CD4-positive, alpha-beta T cell (primary cell): ENCODE measurements at regions of chr1 and their contacts with region 1.

Region 1: DNA sequence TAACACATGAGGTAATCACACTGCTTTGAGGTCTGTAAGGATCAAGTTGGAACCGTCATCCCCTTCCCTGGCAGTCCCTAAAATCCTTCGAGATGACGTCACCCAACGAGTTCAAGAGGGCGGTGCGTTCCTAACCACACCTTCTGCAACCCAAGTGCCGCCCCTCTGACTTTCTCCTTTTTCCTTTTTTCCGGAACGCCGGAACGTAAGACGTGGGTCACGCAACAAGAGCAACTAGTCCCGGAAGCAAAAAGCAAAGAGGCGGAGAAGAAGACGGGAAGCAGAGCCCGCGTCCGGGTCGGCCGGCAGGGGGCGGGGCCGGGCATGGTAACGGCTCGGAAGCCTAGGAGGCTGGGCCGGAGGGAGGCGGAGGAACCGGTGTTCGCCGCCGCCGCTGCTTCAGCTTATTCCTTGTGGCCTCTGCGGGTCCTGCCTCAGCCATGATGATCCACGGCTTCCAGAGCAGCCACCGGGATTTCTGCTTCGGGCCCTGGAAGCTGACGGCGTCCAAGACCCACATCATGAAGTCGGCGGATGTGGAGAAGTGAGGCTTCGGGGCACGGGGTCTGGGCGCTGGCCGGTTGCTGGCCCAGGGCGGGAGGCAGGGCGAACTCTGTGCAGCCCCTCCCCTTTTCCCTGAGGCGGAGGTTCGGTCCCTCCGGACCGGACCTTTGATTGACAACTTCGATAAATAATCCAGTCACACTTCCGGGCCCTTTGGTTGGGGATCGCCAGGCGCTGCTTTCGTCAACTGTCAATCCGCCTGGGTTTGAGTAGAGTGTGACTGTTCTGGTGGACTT is at the start of gene TIPRL:
- DNase-seq: peak; percentile 85 to 97 (median 92)
- ATAC-seq: peak; percentile 89
- H3K4me3 ChIP-seq: peak within 1 kb of the TSS; percentile 89
- H3K4me3 Mint-ChIP-seq: no peak within 1 kb of the TSS
- H3K27ac ChIP-seq: peak within 1 kb of the TSS; percentile 95 to 96
- H3K27ac Mint-ChIP-seq: no peak within 1 kb of the TSS
- H3K4me1 ChIP-seq: peaks cover 22% of the 10 kb centered on the region
- H3K4me1 Mint-ChIP-seq: peaks cover 15% of the 10 kb centered on the region
- H3K27me3 ChIP-seq: no peaks in the 10 kb centered on the region
- H3K27me3 Mint-ChIP-seq: peaks cover 12% of the 10 kb centered on the region
- CTCF ChIP-seq: peak; percentile 63
- total RNA-seq, gene TIPRL: 15.8 to 16.4 TPM

Region 2: GRCh38 chr1:167715157-167715999 is 463.5 kb before region 1 on chr1:
- CTCF ChIA-PET with region 1: no interaction called
- POLR2A ChIA-PET with region 1: no interaction called
- intact Hi-C with region 1: loop called in 1 of 2 experiments (anchors 5 kb)
- DNase-seq: peak; percentile 75 to 94 (median 84)
- ATAC-seq: peak; percentile 59
- H3K4me3 ChIP-seq: peak overlapping the region; percentile 79
- H3K4me3 Mint-ChIP-seq: peak overlapping the region; percentile 92
- H3K27ac ChIP-seq: peak overlapping the region in 1 of 2 donors; percentile 27
- H3K27ac Mint-ChIP-seq: peak overlapping the region; percentile 87
- H3K4me1 ChIP-seq: peaks cover 39% of the 10 kb centered on the region
- H3K4me1 Mint-ChIP-seq: peaks cover 47% of the 10 kb centered on the region
- H3K27me3 ChIP-seq: no peaks in the 10 kb centered on the region
- H3K27me3 Mint-ChIP-seq: peaks cover 18% of the 10 kb centered on the region
- CTCF ChIP-seq: peak; percentile 92

Region 3: DNA sequence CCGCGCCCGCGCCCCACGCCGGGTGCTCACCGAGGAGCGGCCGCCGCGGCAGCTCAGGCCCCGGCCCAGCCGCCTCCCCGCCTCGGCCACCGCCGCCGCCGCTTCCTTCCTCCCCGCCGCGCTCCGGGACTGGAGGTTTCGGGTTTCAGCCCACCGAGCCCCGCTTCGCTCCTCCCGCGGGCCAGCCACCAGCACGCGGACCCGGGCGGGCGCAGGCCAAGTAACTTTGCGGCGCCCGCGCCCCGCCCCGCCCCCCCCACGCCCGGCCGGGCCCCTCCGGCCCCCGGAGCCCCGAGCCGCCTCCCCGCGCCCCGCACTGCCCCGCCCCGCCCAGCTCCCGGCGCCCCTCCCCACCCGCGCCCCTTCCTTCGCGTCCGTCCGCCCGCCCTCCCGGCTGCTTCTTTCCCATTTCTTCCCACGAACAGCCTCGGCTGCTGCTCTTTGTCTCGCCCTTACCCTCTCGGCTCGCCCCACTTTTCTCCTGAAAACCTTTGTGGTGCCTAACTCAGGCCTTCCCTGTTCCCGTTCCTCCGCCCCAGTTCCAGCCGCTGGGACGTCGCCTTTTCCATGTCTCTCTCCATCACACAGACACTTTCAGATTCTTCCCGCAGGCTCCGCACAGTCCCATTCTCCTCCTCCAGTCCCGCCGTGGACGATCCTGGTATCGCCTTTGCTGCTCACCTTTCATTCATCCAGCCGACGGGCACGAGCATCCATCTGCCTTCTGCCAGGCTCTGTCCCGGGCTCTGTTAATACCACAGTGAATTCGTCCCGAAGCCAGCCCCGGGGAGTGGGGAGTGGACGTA is 41.9 kb before region 1 on chr1 and contains the start of gene GPR161:
- CTCF ChIA-PET with region 1: no interaction called
- POLR2A ChIA-PET with region 1: no interaction called
- intact Hi-C with region 1: no loop called
- DNase-seq: peak in 9 of 14 experiments; percentile 3 to 48 (median 23)
- ATAC-seq: peak; percentile 48
- H3K4me3 ChIP-seq: peak within 1 kb of the TSS; percentile 63
- H3K4me3 Mint-ChIP-seq: peak within 1 kb of the TSS; percentile 93
- H3K27ac ChIP-seq: no peak within 1 kb of the TSS
- H3K27ac Mint-ChIP-seq: peak within 1 kb of the TSS; percentile 37
- H3K4me1 ChIP-seq: peaks cover 20% of the 10 kb centered on the region
- H3K4me1 Mint-ChIP-seq: peaks cover 22% of the 10 kb centered on the region
- H3K27me3 ChIP-seq: peaks cover 22 to 34% of the 10 kb centered on the region in 2 experiments
- H3K27me3 Mint-ChIP-seq: peaks cover 38% of the 10 kb centered on the region
- CTCF ChIP-seq: no peak
- total RNA-seq, gene GPR161: not detected

Region 4: GRCh38 chr1:168225476-168226190 is 46.8 kb after region 1 on chr1 and contains the start of gene SFT2D2:
- CTCF ChIA-PET with region 1: no interaction called
- POLR2A ChIA-PET with region 1: interaction called, 5 read pairs
- intact Hi-C with region 1: loop called (anchors 1 to 2 kb)
- DNase-seq: peak; percentile 57 to 89 (median 72)
- ATAC-seq: peak; percentile 96
- H3K4me3 ChIP-seq: peak within 1 kb of the TSS; percentile 94
- H3K4me3 Mint-ChIP-seq: peak within 1 kb of the TSS; percentile 99
- H3K27ac ChIP-seq: peak within 1 kb of the TSS; percentile 28 to 66
- H3K27ac Mint-ChIP-seq: peak within 1 kb of the TSS; percentile 88
- H3K4me1 ChIP-seq: peaks cover 48% of the 10 kb centered on the region
- H3K4me1 Mint-ChIP-seq: peaks cover 54% of the 10 kb centered on the region
- H3K27me3 ChIP-seq: no peaks in the 10 kb centered on the region
- H3K27me3 Mint-ChIP-seq: peaks cover 10% of the 10 kb centered on the region
- CTCF ChIP-seq: no peak
- total RNA-seq, gene SFT2D2: 47.0 to 51.7 TPM

Region 5: GRCh38 chr1:169485544-169486278 is 1306.9 kb after region 1 on chr1 and contains the start of gene SLC19A2:
- CTCF ChIA-PET with region 1: interaction called, 3 read pairs
- POLR2A ChIA-PET with region 1: no interaction called
- intact Hi-C with region 1: loop called in 1 of 2 experiments (anchors 5 kb)
- DNase-seq: peak; percentile 82 to 97 (median 90)
- ATAC-seq: peak; percentile 99
- H3K4me3 ChIP-seq: peak within 1 kb of the TSS; percentile 73
- H3K4me3 Mint-ChIP-seq: peak within 1 kb of the TSS; percentile 98
- H3K27ac ChIP-seq: peak within 1 kb of the TSS; percentile 54 to 65
- H3K27ac Mint-ChIP-seq: peak within 1 kb of the TSS; percentile 92
- H3K4me1 ChIP-seq: peaks cover 20% of the 10 kb centered on the region
- H3K4me1 Mint-ChIP-seq: peaks cover 48% of the 10 kb centered on the region
- H3K27me3 ChIP-seq: no peaks in the 10 kb centered on the region
- H3K27me3 Mint-ChIP-seq: no peaks in the 10 kb centered on the region
- CTCF ChIP-seq: peak; percentile 44
- total RNA-seq, gene SLC19A2: 3.6 to 3.7 TPM

Region 6: DNA sequence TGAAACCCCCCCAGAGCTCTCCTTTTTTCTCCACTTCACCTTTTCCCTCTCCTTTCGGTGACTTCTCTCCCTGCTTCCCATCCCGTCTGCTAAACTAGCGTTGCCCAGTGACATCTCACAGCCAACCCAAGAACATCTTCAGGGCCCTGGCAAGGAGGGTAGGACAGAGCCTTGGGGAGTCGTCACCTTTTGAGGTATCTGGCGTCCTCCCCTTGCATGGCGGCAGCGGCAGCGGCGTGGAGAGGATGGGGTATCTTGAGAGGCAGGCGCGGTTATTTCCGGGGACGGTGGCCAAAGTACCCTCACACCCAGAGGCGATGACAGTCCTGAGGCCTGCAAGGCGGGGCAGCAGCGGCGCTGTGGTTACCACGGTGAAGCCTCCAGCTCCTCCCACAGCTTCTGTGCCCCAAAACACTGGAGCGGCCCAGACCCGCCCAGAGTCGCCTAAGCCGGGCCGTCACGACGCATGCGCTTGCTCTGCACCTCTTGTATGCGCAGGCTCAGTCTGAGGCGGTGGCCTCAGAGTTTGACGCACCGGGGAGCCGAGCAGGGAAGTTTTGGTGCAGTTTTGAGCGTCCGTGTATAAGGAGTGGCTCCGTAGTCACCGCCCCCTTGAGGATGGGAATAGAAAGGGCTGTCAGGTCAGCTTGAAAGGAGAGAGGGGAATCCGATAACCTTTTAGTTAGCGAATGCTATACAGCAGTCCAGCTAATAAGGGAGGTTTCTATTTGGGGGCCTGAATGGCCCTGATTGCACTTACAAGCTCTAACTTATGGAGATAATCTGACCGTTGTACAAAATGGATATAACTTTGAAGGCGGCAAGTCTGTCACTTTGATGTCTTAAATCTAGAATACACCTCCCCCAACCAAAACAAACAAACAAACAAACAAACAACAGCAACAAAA is 1895.7 kb after region 1 on chr1 and contains the start of gene KIFAP3:
- CTCF ChIA-PET with region 1: no interaction called
- POLR2A ChIA-PET with region 1: no interaction called
- intact Hi-C with region 1: loop called in 1 of 2 experiments (anchors 10 kb)
- DNase-seq: peak; percentile 88 to 99 (median 93)
- ATAC-seq: peak; percentile 95
- H3K4me3 ChIP-seq: peak within 1 kb of the TSS; percentile 83
- H3K4me3 Mint-ChIP-seq: peak within 1 kb of the TSS; percentile 97
- H3K27ac ChIP-seq: peak within 1 kb of the TSS; percentile 77 to 83
- H3K27ac Mint-ChIP-seq: peak within 1 kb of the TSS; percentile 85
- H3K4me1 ChIP-seq: peaks cover 15% of the 10 kb centered on the region
- H3K4me1 Mint-ChIP-seq: peaks cover 54% of the 10 kb centered on the region
- H3K27me3 ChIP-seq: no peaks in the 10 kb centered on the region
- H3K27me3 Mint-ChIP-seq: no peaks in the 10 kb centered on the region
- CTCF ChIP-seq: peak; percentile 69
- total RNA-seq, gene KIFAP3: 12.1 to 12.6 TPM